ENCODE measurements at regions of chr2 and their contacts with region 1.

Region 1: GRCh38 chr2:207473049-207473930 is 56.5 kb upstream of the CREB1 start:
- DNase-seq: peak; percentile 29
- ATAC-seq: peak; percentile 47; the same call in 1 of the 2 replicates
- H3K4me3 ChIP-seq: no peak overlapping the region
- H3K27ac ChIP-seq: no peak overlapping the region
- H3K4me1 ChIP-seq: peaks cover 0 to 6% of the 10 kb centered on the region in 2 experiments; a peak in 1 of 4 replicates
- H3K27me3 ChIP-seq: no peaks in the 10 kb centered on the region
- CTCF ChIP-seq: peak; percentile 50 to 89 (median 58)
- POLR2A ChIP-seq: no peak
- RAD21 ChIP-seq: peak; percentile 96

Region 2: GRCh38 chr2:206556357-206556949 is 916.8 kb before region 1 on chr2:
- CTCF ChIA-PET with region 1: no interaction called
- POLR2A ChIA-PET with region 1: no interaction called
- RAD21 ChIA-PET with region 1: no interaction called
- intact Hi-C with region 1: loop called (anchors 10 kb)
- DNase-seq: peak; percentile 48
- ATAC-seq: peak; percentile 84
- H3K4me3 ChIP-seq: no peak overlapping the region
- H3K27ac ChIP-seq: no peak overlapping the region
- H3K4me1 ChIP-seq: no peaks in the 10 kb centered on the region
- H3K27me3 ChIP-seq: peaks cover 6% of the 10 kb centered on the region; the same call in 1 of the 2 replicates
- CTCF ChIP-seq: peak; percentile 38 to 61 (median 41); a peak in 5 of 6 replicates
- POLR2A ChIP-seq: no peak
- RAD21 ChIP-seq: peak; percentile 60

Region 3: GRCh38 chr2:206693399-206694137 is 779.7 kb before region 1 on chr2:
- CTCF ChIA-PET with region 1: no interaction called
- POLR2A ChIA-PET with region 1: no interaction called
- RAD21 ChIA-PET with region 1: no interaction called
- intact Hi-C with region 1: loop called (anchors 1 kb)
- DNase-seq: peak; percentile 75
- ATAC-seq: peak; percentile 94
- H3K4me3 ChIP-seq: no peak overlapping the region
- H3K27ac ChIP-seq: no peak overlapping the region
- H3K4me1 ChIP-seq: no peaks in the 10 kb centered on the region
- H3K27me3 ChIP-seq: no peaks in the 10 kb centered on the region
- CTCF ChIP-seq: peak; percentile 49 to 79 (median 78); a peak in 4 of 6 replicates
- POLR2A ChIP-seq: no peak
- RAD21 ChIP-seq: peak; percentile 89

Region 4: GRCh38 chr2:206800506-206801417 is 672.5 kb before region 1 on chr2:
- CTCF ChIA-PET with region 1: interaction called, 23 read pairs
- POLR2A ChIA-PET with region 1: no interaction called
- RAD21 ChIA-PET with region 1: interaction called in 1 of 2 experiments, 3 read pairs
- intact Hi-C with region 1: loop called (anchors 1 kb)
- DNase-seq: peak; percentile 47
- ATAC-seq: peak; percentile 88
- H3K4me3 ChIP-seq: no peak overlapping the region
- H3K27ac ChIP-seq: no peak overlapping the region
- H3K4me1 ChIP-seq: peaks cover 0 to 3% of the 10 kb centered on the region in 2 experiments; a peak in 1 of 4 replicates
- H3K27me3 ChIP-seq: no peaks in the 10 kb centered on the region
- CTCF ChIP-seq: peak; percentile 64 to 77 (median 70)
- POLR2A ChIP-seq: no peak
- RAD21 ChIP-seq: peak; percentile 92

Region 5: DNA sequence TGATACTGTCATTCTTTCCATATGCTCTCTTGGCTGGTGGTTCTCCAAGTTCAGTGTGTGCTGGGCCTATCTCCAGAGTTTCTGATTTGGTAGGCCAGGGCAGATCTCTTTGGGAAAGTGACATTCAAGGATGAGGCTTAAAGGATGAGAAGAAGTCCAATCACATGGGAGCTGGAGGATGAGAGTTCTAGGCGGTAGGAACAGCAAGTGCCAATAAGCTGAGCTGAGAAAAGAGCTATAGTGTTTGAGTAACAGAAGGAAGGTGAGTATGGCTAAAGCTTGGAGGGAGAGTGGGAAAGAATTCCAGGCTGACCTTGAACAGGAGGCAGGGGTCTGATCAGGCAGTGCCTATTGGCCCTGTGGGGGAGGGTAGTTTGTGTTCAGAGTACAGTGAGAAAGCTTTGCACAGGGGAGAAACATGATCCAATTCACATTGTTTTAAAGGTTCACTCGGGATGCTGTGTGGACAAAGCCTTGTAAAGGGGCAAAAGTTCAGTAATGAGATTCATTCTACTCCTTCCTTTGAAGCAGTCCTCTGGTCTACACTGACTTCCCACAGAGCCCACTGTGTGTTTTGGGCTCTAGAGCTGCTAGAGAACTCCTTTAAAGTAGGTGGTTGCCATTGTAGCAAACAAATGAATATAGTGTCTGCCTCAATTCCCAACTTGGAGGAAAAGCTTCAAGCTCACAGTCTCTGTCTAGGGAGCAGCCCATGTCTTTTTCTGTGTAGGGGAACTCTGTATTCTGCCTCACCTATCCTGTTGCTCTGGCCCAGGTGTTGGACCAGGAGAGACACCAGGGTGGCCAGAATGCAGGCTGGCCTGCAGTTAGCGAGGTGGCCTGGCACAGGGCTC is 626.1 kb before region 1 on chr2:
- CTCF ChIA-PET with region 1: no interaction called
- POLR2A ChIA-PET with region 1: no interaction called
- RAD21 ChIA-PET with region 1: no interaction called
- intact Hi-C with region 1: no loop called
- DNase-seq: no peak
- ATAC-seq: no peak
- H3K4me3 ChIP-seq: no peak overlapping the region
- H3K27ac ChIP-seq: no peak overlapping the region
- H3K4me1 ChIP-seq: no peaks in the 10 kb centered on the region
- H3K27me3 ChIP-seq: no peaks in the 10 kb centered on the region
- CTCF ChIP-seq: no peak
- POLR2A ChIP-seq: no peak
- RAD21 ChIP-seq: no peak

Region 6: DNA sequence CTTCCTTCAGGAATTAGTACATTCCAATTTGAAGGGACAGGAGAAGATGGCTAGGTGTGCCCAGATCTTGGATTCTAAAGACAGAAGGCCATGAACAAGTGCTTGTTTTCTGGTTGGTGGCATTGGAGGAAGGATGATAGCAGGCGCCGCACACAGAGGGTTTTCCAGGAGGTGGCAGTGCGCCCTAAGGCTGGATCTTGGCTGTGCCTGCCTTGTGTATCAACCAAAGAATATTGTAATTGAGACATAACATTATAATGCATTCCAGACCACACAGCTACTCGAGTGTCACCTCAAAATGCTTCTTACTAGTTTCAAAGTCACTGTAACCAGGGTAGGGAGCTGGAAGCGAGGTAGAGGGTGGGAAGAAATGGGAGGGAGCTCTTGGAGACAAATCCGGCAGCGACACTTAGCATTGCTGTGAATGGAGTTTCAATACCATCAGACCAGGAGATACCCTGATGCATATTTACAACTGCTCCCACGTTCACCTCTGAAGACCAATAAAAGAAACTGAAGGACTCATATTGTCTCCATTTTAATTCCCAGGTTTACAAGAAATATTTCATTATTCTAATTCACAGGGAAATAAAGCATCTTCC is 491.4 kb before region 1 on chr2:
- CTCF ChIA-PET with region 1: interaction called, 30 read pairs
- POLR2A ChIA-PET with region 1: no interaction called
- RAD21 ChIA-PET with region 1: no interaction called
- intact Hi-C with region 1: loop called (anchors 1 kb)
- DNase-seq: peak; percentile 36
- ATAC-seq: peak; percentile 91
- H3K4me3 ChIP-seq: no peak overlapping the region
- H3K27ac ChIP-seq: no peak overlapping the region
- H3K4me1 ChIP-seq: no peaks in the 10 kb centered on the region
- H3K27me3 ChIP-seq: no peaks in the 10 kb centered on the region
- CTCF ChIP-seq: peak; percentile 75 to 83 (median 78)
- POLR2A ChIP-seq: no peak
- RAD21 ChIP-seq: peak; percentile 96

Region 7: GRCh38 chr2:207143215-207144172 is 329.8 kb before region 1 on chr2:
- CTCF ChIA-PET with region 1: no interaction called
- POLR2A ChIA-PET with region 1: no interaction called
- RAD21 ChIA-PET with region 1: no interaction called
- intact Hi-C with region 1: no loop called
- DNase-seq: no peak
- ATAC-seq: no peak
- H3K4me3 ChIP-seq: no peak overlapping the region
- H3K27ac ChIP-seq: no peak overlapping the region
- H3K4me1 ChIP-seq: peaks cover 0 to 3% of the 10 kb centered on the region in 2 experiments; a peak in 1 of 4 replicates
- H3K27me3 ChIP-seq: no peaks in the 10 kb centered on the region
- CTCF ChIP-seq: no peak
- POLR2A ChIP-seq: no peak
- RAD21 ChIP-seq: no peak

Region 8: GRCh38 chr2:207166039-207166348 is 307.3 kb before region 1 on chr2:
- CTCF ChIA-PET with region 1: no interaction called
- POLR2A ChIA-PET with region 1: no interaction called
- RAD21 ChIA-PET with region 1: no interaction called
- intact Hi-C with region 1: loop called (anchors 5 kb)
- DNase-seq: peak; percentile 94
- ATAC-seq: peak; percentile 96
- H3K4me3 ChIP-seq: peak overlapping the region; percentile 49 to 67
- H3K27ac ChIP-seq: peak overlapping the region; percentile 98
- H3K4me1 ChIP-seq: peaks cover 24 to 54% of the 10 kb centered on the region in 2 experiments
- H3K27me3 ChIP-seq: no peaks in the 10 kb centered on the region
- CTCF ChIP-seq: no peak
- POLR2A ChIP-seq: no peak
- RAD21 ChIP-seq: no peak

Region 9: DNA sequence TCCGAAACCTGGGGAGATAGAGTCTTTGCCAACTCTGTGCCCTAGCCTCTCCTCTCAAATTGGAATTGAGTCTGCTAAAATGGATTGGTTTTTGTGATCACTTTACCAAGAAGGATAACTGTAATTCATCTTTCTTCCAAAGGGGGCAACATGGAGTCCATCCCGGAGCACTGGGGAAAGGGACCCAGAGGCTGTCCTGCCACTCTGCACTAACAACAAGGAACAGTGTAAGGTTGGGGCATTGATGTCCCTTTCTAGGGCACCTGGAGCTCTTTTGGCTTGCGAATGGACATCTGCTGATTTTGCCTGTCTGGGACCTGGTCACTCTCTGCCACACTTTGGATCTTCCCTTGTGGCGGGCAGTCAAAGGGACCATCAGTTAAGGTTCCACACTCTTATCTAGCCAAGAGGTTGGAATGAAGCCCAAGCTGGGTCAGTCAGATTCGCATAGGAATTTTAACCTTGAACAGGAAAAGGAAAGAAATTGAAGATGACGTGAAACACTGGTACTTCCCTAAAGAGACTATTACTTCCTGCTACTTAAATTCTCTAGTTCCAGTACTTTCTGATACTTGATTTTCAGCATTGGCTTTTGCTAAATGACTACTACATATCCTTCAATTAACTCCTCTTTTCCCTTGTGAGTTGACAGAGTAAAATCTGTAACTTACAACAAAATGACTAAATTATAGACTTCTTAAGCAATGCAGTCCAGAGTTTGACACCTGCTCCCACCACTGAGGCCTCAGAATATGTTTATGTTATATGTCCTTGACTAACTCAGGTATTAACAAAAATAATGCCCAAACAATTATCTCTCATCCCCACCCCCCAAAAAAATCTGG is 242.8 kb before region 1 on chr2:
- CTCF ChIA-PET with region 1: no interaction called
- POLR2A ChIA-PET with region 1: no interaction called
- RAD21 ChIA-PET with region 1: no interaction called
- intact Hi-C with region 1: loop called (anchors 1 kb)
- DNase-seq: peak; percentile 26
- ATAC-seq: peak; percentile 98
- H3K4me3 ChIP-seq: no peak overlapping the region
- H3K27ac ChIP-seq: no peak overlapping the region
- H3K4me1 ChIP-seq: no peaks in the 10 kb centered on the region
- H3K27me3 ChIP-seq: no peaks in the 10 kb centered on the region
- CTCF ChIP-seq: peak; percentile 25 to 70 (median 67); a peak in 5 of 6 replicates
- POLR2A ChIP-seq: no peak
- RAD21 ChIP-seq: peak; percentile 43; the same call in 1 of the 2 replicates

Region 10: GRCh38 chr2:207487650-207488311 is 14.5 kb after region 1 on chr2:
- CTCF ChIA-PET with region 1: no interaction called
- POLR2A ChIA-PET with region 1: no interaction called
- RAD21 ChIA-PET with region 1: no interaction called
- intact Hi-C with region 1: no loop called
- DNase-seq: peak; percentile 32
- ATAC-seq: peak; percentile 87
- H3K4me3 ChIP-seq: peak overlapping the region in 1 of 2 experiments; percentile 2; a peak in 1 of 4 replicates
- H3K27ac ChIP-seq: no peak overlapping the region
- H3K4me1 ChIP-seq: peaks cover 0 to 15% of the 10 kb centered on the region in 2 experiments; a peak in 2 of 4 replicates
- H3K27me3 ChIP-seq: no peaks in the 10 kb centered on the region
- CTCF ChIP-seq: 0 out of 6 replicates have a peak, but pooled peaks of 1 of the 3 experiments have one; percentile 11
- POLR2A ChIP-seq: no peak
- RAD21 ChIP-seq: peak; percentile 43

Measured in HCT116 (cell line).